ENCODE measurements at regions of chr2 and their contacts with region 1.

Region 1: DNA sequence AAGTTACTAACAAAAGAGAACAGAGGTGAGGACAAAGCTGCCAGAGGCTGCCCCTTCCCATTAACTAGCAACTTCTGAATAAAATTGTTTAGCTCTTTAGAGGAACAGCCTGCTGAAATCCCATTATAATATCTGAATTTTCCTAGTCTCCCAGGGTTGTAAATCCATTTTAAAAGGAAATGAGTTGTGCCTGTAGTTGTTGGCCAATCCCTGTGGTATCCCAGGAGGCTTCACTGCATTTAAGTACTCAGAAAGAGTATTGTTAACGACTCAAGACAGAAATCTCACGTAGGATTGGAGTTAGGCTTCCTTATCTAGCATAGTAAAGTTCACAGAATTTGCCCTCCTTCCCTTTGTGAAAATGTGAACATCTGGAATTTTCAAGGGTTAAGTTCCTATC is 8.9 kb downstream of the LAPTM4A start:
- DNase-seq: no peak
- H3K4me3 ChIP-seq: no peak overlapping the region
- H3K27ac ChIP-seq: peak overlapping the region; percentile 16; the same call in 1 of the 2 replicates
- H3K4me1 ChIP-seq: peaks cover 23% of the 10 kb centered on the region
- H3K27me3 ChIP-seq: no peaks in the 10 kb centered on the region
- CTCF ChIP-seq: no peak

Region 2: DNA sequence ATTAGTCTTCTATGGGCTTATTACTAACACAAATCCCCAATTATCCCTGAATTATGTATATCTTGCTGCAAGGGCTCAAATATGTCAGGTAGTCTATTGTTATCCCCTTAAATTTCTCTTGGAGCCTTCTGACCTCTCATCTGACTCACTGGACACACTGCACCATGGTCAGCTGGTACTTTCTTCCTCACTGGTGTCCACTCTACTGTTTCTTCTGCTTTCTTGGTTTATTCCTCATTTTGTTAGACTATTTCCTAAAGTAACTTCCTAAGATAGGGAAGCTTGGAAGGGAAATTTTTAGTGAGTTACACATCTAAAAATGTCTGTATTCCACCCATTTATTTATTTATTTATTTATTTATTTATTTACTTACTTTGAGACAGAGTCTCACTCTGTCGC is 79.1 kb before region 1 on chr2:
- CTCF ChIA-PET with region 1: no interaction called
- POLR2A ChIA-PET with region 1: no interaction called
- intact Hi-C with region 1: no loop called
- DNase-seq: no peak
- H3K4me3 ChIP-seq: no peak overlapping the region
- H3K27ac ChIP-seq: no peak overlapping the region
- H3K4me1 ChIP-seq: no peaks in the 10 kb centered on the region
- H3K27me3 ChIP-seq: no peaks in the 10 kb centered on the region
- CTCF ChIP-seq: no peak

Region 3: GRCh38 chr2:20008703-20009102 is 33.8 kb before region 1 on chr2:
- CTCF ChIA-PET with region 1: interaction called, 12 read pairs
- POLR2A ChIA-PET with region 1: no interaction called
- intact Hi-C with region 1: no loop called
- DNase-seq: peak in 1 of 2 experiments; percentile 51
- H3K4me3 ChIP-seq: no peak overlapping the region
- H3K27ac ChIP-seq: no peak overlapping the region
- H3K4me1 ChIP-seq: peaks cover 5% of the 10 kb centered on the region; the same call in 1 of the 2 replicates
- H3K27me3 ChIP-seq: peaks cover 9% of the 10 kb centered on the region; the same call in 1 of the 2 replicates
- CTCF ChIP-seq: no peak